Activated B cell treated with CpG ODN at 0.5 μM for 24 hours (primary cell): ENCODE measurements at regions of chr6 and their contacts with region 1.

Region 1: DNA sequence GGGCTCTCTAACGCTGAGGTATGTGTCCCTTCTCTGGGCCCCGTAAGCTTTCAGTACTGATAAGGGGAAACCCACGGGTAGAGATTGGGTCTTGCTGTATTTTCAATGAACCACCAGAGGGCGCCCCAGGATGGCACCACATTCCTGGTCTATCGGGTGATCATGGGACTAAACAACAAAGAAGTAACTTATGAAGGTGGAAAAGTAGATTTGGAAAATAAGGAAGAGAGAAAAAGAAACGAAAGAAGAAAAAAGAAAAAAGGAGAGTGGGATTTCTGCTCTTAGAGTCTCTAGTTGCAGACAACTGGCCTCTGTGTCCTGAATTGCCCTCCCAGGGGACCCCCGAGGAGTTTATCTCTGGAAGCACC is 93.8 kb downstream of the GMPR start:
- DNase-seq: peak; percentile 62
- ATAC-seq: peak; percentile 96
- H3K4me3 Mint-ChIP-seq: no peak overlapping the region
- H3K27ac Mint-ChIP-seq: no peak overlapping the region
- H3K4me1 Mint-ChIP-seq: peaks cover 11% of the 10 kb centered on the region
- H3K27me3 Mint-ChIP-seq: no peaks in the 10 kb centered on the region
- CTCF ChIP-seq: peak; percentile 78

Region 2: GRCh38 chr6:16238057-16238962 is 93.8 kb before region 1 on chr6 and contains the start of gene GMPR:
- CTCF ChIA-PET with region 1: interaction called, 4 read pairs
- POLR2A ChIA-PET with region 1: no interaction called
- intact Hi-C with region 1: loop called (anchors 1 kb)
- DNase-seq: peak; percentile 57
- ATAC-seq: peak; percentile 87
- H3K4me3 Mint-ChIP-seq: peak within 1 kb of the TSS; percentile 91
- H3K27ac Mint-ChIP-seq: peak within 1 kb of the TSS; percentile 57
- H3K4me1 Mint-ChIP-seq: peaks cover 34% of the 10 kb centered on the region
- H3K27me3 Mint-ChIP-seq: peaks cover 24% of the 10 kb centered on the region
- CTCF ChIP-seq: no peak
- total RNA-seq, gene GMPR: 0.47 and 0.98 TPM in 2 replicates

Region 3: DNA sequence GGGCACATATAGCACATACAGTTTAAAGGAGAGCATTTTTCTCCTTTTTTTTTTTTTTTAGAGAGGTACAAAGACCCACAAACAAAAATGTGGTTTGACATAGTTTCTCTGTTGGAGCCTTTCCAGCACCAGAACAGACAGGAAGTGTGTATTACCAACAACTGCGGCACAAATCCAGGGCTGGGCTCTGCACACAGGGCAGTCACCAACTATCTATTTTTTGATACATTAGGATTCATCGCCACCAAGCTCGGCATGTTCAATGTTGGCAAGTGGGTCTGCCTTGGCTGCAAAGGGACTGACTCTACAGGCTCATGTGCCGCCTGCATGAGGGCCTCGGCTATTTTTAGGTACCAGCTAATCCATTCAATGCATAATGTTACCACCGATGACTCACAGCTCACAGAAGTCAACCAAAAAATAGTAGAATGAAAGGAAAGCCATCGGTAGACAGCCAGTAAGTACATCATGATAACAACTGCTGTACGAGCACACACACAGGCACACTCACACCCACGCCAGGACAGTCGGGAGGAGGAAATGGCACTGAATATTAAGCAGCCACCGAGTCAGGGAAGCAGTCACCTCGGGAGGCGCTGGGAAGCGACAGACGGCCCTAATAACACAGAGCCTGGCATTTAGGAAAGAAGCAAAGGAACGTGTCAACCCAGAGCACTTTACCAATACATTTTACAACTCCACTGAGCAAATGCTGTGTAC is 12.2 kb before region 1 on chr6:
- CTCF ChIA-PET with region 1: interaction called, 50 read pairs
- POLR2A ChIA-PET with region 1: interaction called, 6 read pairs
- intact Hi-C with region 1: loop called (anchors 1 kb)
- DNase-seq: no peak
- ATAC-seq: peak; percentile 67
- H3K4me3 Mint-ChIP-seq: peak overlapping the region; percentile 9
- H3K27ac Mint-ChIP-seq: peak overlapping the region; percentile 13
- H3K4me1 Mint-ChIP-seq: peaks cover 44% of the 10 kb centered on the region
- H3K27me3 Mint-ChIP-seq: no peaks in the 10 kb centered on the region
- CTCF ChIP-seq: no peak

Region 4: DNA sequence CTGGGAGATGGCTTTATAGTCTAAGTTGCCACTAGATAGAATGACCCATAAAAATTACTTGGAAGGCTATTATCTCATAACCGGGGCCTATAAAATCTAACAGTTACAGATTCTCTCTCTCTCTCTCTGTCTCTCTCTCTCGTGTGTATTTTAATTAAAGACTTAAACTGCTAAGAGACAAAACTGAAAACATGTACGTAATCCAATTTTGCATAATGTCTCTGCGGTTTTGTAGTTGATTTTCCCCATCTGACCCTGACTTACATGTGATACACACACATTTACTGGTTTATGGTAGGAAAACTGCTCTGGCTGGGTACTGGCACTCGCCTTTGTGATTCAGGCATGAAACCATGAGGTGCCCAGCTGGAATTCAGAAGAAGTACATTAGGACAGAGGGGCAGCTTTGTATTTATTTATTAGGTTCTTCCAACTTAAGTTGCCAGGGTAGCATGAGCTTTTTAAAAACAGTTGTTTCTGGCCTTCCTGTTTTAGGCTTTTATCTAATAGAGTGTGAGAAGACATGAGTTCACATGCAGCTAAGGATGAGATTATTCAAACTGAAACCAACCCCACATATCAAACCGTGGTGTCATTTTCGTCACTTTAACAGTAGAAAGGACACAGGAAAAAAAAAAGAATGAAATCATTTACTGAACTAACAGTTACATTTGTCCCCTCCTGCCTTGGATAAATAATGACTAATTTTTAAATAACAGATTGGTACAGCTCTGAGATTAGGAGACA is 88.7 kb after region 1 on chr6:
- CTCF ChIA-PET with region 1: interaction called, 4 read pairs
- POLR2A ChIA-PET with region 1: interaction called, 7 read pairs
- intact Hi-C with region 1: loop called (anchors 1 kb)
- DNase-seq: peak; percentile 27
- ATAC-seq: peak; percentile 66
- H3K4me3 Mint-ChIP-seq: peak overlapping the region; percentile 62
- H3K27ac Mint-ChIP-seq: peak overlapping the region; percentile 98
- H3K4me1 Mint-ChIP-seq: peaks cover 47% of the 10 kb centered on the region
- H3K27me3 Mint-ChIP-seq: no peaks in the 10 kb centered on the region
- CTCF ChIP-seq: no peak

Region 5: DNA sequence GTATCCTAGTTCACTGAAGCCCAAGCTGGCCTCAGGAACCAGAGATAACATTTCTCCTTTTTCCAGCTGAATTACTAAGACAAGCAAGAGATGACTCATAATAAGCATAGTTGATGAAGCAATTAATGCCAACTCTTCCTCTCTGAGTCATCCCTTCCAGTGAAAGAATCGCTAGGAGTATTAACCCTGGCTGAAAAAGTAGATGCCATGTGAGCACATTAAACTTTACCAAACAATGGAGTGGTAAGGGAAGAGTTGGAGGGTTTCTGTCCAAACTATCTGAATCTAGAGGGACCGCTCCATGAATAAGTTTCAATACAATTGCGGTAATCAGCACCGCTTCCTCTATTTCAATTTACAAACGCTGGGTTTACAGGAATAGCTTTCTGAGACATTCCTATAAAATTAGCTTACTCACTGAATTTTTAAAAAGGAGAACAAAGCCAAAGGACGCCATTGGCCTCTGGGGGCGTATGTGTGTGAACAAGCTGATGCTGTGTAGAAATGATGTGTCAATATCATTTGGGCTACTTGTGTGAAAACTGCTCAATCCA is 380.8 kb after region 1 on chr6:
- CTCF ChIA-PET with region 1: interaction called, 3 read pairs
- POLR2A ChIA-PET with region 1: no interaction called
- intact Hi-C with region 1: loop called (anchors 2 kb)
- DNase-seq: no peak
- ATAC-seq: peak; percentile 54
- H3K4me3 Mint-ChIP-seq: peak overlapping the region; percentile 75
- H3K27ac Mint-ChIP-seq: peak overlapping the region; percentile 94
- H3K4me1 Mint-ChIP-seq: peaks cover 28% of the 10 kb centered on the region
- H3K27me3 Mint-ChIP-seq: no peaks in the 10 kb centered on the region
- CTCF ChIP-seq: no peak

Region 6: GRCh38 chr6:17086469-17086868 is 754.3 kb after region 1 on chr6:
- CTCF ChIA-PET with region 1: no interaction called
- POLR2A ChIA-PET with region 1: no interaction called
- intact Hi-C with region 1: loop called (anchors 1 kb)
- DNase-seq: no peak
- ATAC-seq: no peak
- H3K4me3 Mint-ChIP-seq: no peak overlapping the region
- H3K27ac Mint-ChIP-seq: no peak overlapping the region
- H3K4me1 Mint-ChIP-seq: no peaks in the 10 kb centered on the region
- H3K27me3 Mint-ChIP-seq: peaks cover 3% of the 10 kb centered on the region
- CTCF ChIP-seq: no peak